ENCODE measurements at regions of chr12 and their contacts with region 1.

Region 1: DNA sequence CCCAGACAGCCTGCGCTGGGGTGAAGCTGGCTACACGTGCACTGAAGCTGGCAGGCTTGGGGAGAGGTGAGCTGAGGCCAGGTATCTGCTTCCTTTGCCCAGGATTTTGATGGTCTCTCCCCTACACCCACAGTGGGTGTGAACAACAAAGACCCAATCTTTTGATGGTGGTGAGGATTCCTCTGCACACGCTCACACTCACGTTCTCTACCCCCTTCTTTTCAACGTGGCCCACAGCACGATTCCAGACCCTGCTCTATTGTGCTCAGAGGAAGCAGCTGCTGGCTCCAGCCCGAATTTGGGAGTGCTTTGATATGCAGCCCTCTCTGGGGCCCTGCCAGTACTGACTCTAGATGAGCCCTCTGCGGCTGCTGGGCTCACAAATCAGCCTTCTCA is 4.9 kb downstream of the CD9 start:
- DNase-seq: no peak
- ATAC-seq: no peak
- H3K4me3 ChIP-seq: no peak overlapping the region
- H3K27ac ChIP-seq: no peak overlapping the region
- H3K4me1 ChIP-seq: no peaks in the 10 kb centered on the region
- H3K27me3 ChIP-seq: peaks cover 2 to 14% of the 10 kb centered on the region in 2 experiments; a peak in 3 of 4 replicates
- CTCF ChIP-seq: no peak
- EP300 ChIP-seq: no peak
- POLR2A ChIP-seq: no peak
- RAD21 ChIP-seq: no peak

Region 2: GRCh38 chr12:6215932-6216494 is 10.9 kb after region 1 on chr12:
- CTCF ChIA-PET with region 1: interaction called, 38 read pairs
- POLR2A ChIA-PET with region 1: interaction called, 20 read pairs
- RAD21 ChIA-PET with region 1: interaction called, 9 read pairs
- SMC1A ChIA-PET with region 1: interaction called, 30 read pairs
- in situ Hi-C with region 1: no loop called
- intact Hi-C with region 1: no loop called
- DNase-seq: no peak
- ATAC-seq: peak; percentile 34
- H3K4me3 ChIP-seq: no peak overlapping the region
- H3K27ac ChIP-seq: no peak overlapping the region
- H3K4me1 ChIP-seq: no peaks in the 10 kb centered on the region
- H3K27me3 ChIP-seq: no peaks in the 10 kb centered on the region; a peak in 1 of 4 replicates
- CTCF ChIP-seq: no peak
- EP300 ChIP-seq: no peak
- POLR2A ChIP-seq: no peak
- RAD21 ChIP-seq: no peak

Region 3: DNA sequence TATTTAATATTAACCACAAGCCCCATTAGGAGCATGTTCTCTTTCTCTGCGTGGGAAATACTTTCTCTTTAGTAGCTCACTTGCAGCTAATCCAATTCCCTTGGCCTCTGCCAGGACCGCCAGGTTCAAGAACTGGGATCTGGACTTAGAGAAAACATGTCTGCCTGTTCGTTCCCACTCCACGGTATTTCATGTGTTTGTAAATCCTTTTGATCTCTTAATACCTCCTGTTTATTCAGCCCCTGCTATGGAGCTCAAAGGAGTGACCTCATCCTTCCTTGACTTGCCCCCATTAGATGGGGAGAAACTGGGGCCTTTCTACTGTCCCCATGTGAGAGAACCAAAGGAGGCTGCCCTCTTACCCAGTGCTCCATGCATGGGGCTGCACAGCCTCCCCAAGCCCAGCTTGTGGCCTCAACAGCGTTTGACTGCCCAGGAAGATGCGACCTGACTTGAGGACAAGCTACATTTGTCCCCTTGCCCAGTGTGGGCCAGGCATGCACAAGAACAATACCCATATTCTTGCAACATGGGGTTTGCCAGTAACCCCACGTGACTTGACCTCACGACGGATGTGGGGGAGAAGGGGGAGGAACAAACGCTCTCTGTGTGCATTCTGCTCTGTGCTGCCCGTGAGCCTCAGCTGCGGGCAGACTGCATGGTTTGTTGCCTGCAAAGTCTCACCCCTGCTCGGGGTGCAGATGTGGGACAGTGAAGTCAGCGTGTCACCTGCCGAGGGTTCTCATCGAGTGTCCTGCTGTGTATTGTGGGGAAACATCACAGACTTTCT is 25.4 kb after region 1 on chr12:
- CTCF ChIA-PET with region 1: interaction called, 10 read pairs
- POLR2A ChIA-PET with region 1: interaction called, 12 read pairs
- RAD21 ChIA-PET with region 1: interaction called, 27 read pairs
- SMC1A ChIA-PET with region 1: interaction called, 72 read pairs
- in situ Hi-C with region 1: no loop called
- intact Hi-C with region 1: loop called (anchors 2 kb)
- DNase-seq: peak; percentile 69
- ATAC-seq: peak; percentile 98
- H3K4me3 ChIP-seq: no peak overlapping the region
- H3K27ac ChIP-seq: no peak overlapping the region
- H3K4me1 ChIP-seq: peaks cover 9% of the 10 kb centered on the region
- H3K27me3 ChIP-seq: no peaks in the 10 kb centered on the region; a peak in 1 of 4 replicates
- CTCF ChIP-seq: no peak
- EP300 ChIP-seq: peak; percentile 67 to 84; a peak in 3 of 4 replicates
- POLR2A ChIP-seq: peak; percentile 16; the same call in 1 of the 2 replicates
- RAD21 ChIP-seq: no peak

Region 4: GRCh38 chr12:6267139-6267721 is 62.1 kb after region 1 on chr12:
- CTCF ChIA-PET with region 1: interaction called, 401 read pairs
- POLR2A ChIA-PET with region 1: interaction called, 4 read pairs
- RAD21 ChIA-PET with region 1: interaction called, 304 read pairs
- SMC1A ChIA-PET with region 1: interaction called, 7 read pairs
- in situ Hi-C with region 1: no loop called
- intact Hi-C with region 1: no loop called
- DNase-seq: no peak
- ATAC-seq: peak; percentile 77
- H3K4me3 ChIP-seq: no peak overlapping the region
- H3K27ac ChIP-seq: no peak overlapping the region
- H3K4me1 ChIP-seq: peaks cover 5% of the 10 kb centered on the region
- H3K27me3 ChIP-seq: no peaks in the 10 kb centered on the region
- CTCF ChIP-seq: no peak
- EP300 ChIP-seq: peak in 1 of 2 experiments; percentile 62; a peak in 2 of 4 replicates
- POLR2A ChIP-seq: no peak
- RAD21 ChIP-seq: no peak

Region 5: DNA sequence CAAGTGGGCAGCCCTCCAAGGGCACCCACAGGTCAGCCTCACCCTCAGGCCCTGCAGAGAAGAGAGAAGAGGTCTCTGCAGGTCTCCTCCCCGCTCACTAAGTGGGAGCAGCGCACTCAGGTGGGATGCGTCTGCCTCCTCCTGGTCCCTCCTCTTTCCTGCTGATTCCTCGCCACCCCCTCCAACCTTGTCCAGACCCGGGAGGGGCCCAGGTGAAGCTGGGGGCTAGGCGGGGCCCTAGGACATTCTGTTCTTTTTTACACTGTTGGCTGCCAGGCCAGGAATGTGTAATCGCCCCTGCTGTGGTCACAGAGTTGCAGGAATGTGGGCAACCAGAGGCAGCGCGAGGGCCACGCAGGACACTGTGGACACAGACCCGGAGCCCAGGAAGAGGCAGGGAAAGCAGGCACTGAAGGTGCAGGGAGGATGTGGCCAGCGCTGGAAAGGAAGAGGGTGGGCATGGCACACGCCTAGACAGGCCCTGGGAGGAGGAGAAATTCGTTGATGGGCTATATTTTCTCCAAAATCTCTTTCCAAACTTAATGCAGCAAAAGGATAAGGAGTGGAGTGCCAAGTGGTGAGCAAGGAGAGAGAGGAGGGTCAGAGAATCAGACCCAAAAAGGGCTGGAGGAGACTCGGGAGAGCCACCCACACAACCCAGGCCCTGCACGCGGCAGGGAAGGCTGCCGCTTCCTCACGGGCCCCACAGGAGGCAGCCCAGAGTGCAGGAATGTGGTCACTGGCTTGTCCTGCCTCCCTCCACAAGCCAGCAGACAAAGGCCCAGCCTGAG is 171.1 kb after region 1 on chr12:
- CTCF ChIA-PET with region 1: no interaction called
- POLR2A ChIA-PET with region 1: no interaction called
- RAD21 ChIA-PET with region 1: no interaction called
- SMC1A ChIA-PET with region 1: no interaction called
- in situ Hi-C with region 1: no loop called
- intact Hi-C with region 1: no loop called
- DNase-seq: no peak
- ATAC-seq: peak; percentile 39
- H3K4me3 ChIP-seq: no peak overlapping the region
- H3K27ac ChIP-seq: no peak overlapping the region
- H3K4me1 ChIP-seq: no peaks in the 10 kb centered on the region
- H3K27me3 ChIP-seq: peaks cover 0 to 2% of the 10 kb centered on the region in 2 experiments; a peak in 2 of 4 replicates
- CTCF ChIP-seq: no peak
- EP300 ChIP-seq: no peak
- POLR2A ChIP-seq: no peak
- RAD21 ChIP-seq: no peak

Region 6: GRCh38 chr12:8045952-8046944 is 1841.1 kb after region 1 on chr12:
- CTCF ChIA-PET with region 1: no interaction called
- POLR2A ChIA-PET with region 1: interaction called, 10 read pairs
- RAD21 ChIA-PET with region 1: no interaction called
- SMC1A ChIA-PET with region 1: no interaction called
- in situ Hi-C with region 1: no loop called
- intact Hi-C with region 1: no loop called
- DNase-seq: no peak
- ATAC-seq: peak; percentile 89
- H3K4me3 ChIP-seq: no peak overlapping the region
- H3K27ac ChIP-seq: no peak overlapping the region
- H3K4me1 ChIP-seq: no peaks in the 10 kb centered on the region
- H3K27me3 ChIP-seq: no peaks in the 10 kb centered on the region
- CTCF ChIP-seq: peak; percentile 85 to 89 (median 86)
- EP300 ChIP-seq: no peak
- POLR2A ChIP-seq: no peak
- RAD21 ChIP-seq: peak; percentile 66